ENCODE measurements at regions of chr10 and their contacts with region 1.

Region 1: GRCh38 chr10:21336476-21337170 is 188.9 kb downstream of the SKIDA1 start:
- DNase-seq: peak; percentile 81 to 85
- H3K4me3 ChIP-seq: peak overlapping the region; percentile 8; the same call in 1 of the 2 replicates
- H3K27ac ChIP-seq: peak overlapping the region; percentile 92
- H3K4me1 ChIP-seq: peaks cover 54% of the 10 kb centered on the region
- H3K27me3 ChIP-seq: no peaks in the 10 kb centered on the region
- CTCF ChIP-seq: no peak

Region 2: DNA sequence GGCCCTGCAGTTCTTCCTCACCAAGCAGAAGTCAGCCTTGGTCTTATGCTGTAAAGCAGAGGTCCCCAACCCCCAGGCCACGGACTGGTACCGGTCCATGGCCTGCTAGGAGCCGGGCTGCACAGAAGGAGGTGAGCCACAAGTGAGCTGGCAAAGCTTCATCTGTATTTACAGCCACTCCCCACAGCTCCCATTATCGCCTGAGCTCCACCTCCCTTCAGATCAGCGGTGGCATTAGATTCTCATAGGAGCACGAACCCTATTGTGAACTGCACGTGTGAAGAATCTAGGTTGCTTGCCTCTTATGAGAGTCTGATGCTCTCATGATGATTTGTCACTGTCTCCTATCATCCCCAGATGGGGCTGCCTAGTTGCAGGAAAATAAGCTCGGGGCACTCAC is 352.0 kb before region 1 on chr10:
- CTCF ChIA-PET with region 1: no interaction called
- POLR2A ChIA-PET with region 1: no interaction called
- intact Hi-C with region 1: no loop called
- DNase-seq: no peak
- H3K4me3 ChIP-seq: no peak overlapping the region
- H3K27ac ChIP-seq: no peak overlapping the region
- H3K4me1 ChIP-seq: no peaks in the 10 kb centered on the region
- H3K27me3 ChIP-seq: no peaks in the 10 kb centered on the region
- CTCF ChIP-seq: no peak

Region 3: GRCh38 chr10:21083871-21084295 is 252.7 kb before region 1 on chr10:
- CTCF ChIA-PET with region 1: no interaction called
- POLR2A ChIA-PET with region 1: no interaction called
- intact Hi-C with region 1: loop called (anchors 2 kb)
- DNase-seq: peak; percentile 75 to 97
- H3K4me3 ChIP-seq: no peak overlapping the region
- H3K27ac ChIP-seq: peak overlapping the region; percentile 80
- H3K4me1 ChIP-seq: peaks cover 21% of the 10 kb centered on the region
- H3K27me3 ChIP-seq: no peaks in the 10 kb centered on the region
- CTCF ChIP-seq: no peak

Region 4: DNA sequence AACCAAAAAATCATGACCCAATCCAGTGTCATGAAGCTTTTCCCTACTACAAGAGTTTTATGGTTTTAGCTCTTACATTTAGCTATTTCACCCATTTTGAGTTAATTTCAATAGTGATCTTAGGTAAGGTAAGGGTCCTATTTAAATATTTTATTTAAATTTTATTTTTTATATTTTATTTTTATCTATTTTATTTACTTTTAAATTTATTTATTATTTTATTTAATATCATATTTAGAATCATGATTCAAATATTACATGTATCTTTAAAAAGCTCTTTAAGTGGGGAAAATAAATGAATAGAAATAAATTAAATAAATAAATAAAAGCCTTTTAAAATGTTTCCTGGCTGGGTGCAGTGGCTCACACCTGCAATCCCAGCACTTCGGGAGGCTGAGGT is 87.2 kb before region 1 on chr10:
- CTCF ChIA-PET with region 1: no interaction called
- POLR2A ChIA-PET with region 1: no interaction called
- intact Hi-C with region 1: no loop called
- DNase-seq: no peak
- H3K4me3 ChIP-seq: no peak overlapping the region
- H3K27ac ChIP-seq: no peak overlapping the region
- H3K4me1 ChIP-seq: no peaks in the 10 kb centered on the region
- H3K27me3 ChIP-seq: no peaks in the 10 kb centered on the region
- CTCF ChIP-seq: no peak

Region 5: DNA sequence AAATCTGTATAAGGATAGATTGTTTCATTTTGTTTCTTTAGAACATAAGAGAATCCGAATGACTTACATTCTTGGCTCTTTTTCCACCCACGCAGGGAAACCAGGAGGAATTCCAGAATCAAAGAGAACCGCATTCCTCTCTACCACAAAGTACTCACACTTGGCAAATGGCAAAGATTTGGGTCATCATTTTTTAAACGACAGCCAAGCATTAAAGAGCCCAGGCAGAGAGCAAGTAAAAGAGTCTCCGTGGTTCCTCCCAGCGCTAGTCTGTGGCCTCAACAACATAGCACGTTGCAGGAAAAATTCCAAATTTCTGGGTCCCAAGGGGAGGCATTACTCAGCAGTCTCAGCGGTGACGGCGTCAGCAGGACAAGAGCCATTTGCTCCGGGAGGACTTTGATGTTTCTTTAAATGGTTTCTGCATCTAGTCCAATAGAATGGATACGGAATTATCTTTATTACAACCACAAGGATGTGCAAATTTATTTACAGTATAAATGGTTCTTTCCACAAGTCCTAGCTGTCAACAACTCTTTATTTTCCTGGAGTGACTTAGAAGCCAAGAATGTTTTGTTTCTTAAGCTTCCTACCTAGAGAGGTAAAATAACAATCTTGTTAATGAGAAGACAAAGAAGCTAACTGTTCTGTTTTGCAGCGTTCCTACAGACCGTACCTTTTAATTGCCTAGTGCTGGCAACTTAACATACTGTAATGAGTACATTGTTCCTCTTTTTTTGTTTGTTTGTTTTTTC is 43.7 kb before region 1 on chr10:
- CTCF ChIA-PET with region 1: interaction called, 3 read pairs
- POLR2A ChIA-PET with region 1: interaction called, 4 read pairs
- intact Hi-C with region 1: loop called (anchors 1 kb)
- DNase-seq: peak; percentile 77 to 87
- H3K4me3 ChIP-seq: peak overlapping the region; percentile 51; the same call in 1 of the 2 replicates
- H3K27ac ChIP-seq: peak overlapping the region; percentile 85
- H3K4me1 ChIP-seq: peaks cover 32% of the 10 kb centered on the region
- H3K27me3 ChIP-seq: no peaks in the 10 kb centered on the region
- CTCF ChIP-seq: no peak

Region 6: DNA sequence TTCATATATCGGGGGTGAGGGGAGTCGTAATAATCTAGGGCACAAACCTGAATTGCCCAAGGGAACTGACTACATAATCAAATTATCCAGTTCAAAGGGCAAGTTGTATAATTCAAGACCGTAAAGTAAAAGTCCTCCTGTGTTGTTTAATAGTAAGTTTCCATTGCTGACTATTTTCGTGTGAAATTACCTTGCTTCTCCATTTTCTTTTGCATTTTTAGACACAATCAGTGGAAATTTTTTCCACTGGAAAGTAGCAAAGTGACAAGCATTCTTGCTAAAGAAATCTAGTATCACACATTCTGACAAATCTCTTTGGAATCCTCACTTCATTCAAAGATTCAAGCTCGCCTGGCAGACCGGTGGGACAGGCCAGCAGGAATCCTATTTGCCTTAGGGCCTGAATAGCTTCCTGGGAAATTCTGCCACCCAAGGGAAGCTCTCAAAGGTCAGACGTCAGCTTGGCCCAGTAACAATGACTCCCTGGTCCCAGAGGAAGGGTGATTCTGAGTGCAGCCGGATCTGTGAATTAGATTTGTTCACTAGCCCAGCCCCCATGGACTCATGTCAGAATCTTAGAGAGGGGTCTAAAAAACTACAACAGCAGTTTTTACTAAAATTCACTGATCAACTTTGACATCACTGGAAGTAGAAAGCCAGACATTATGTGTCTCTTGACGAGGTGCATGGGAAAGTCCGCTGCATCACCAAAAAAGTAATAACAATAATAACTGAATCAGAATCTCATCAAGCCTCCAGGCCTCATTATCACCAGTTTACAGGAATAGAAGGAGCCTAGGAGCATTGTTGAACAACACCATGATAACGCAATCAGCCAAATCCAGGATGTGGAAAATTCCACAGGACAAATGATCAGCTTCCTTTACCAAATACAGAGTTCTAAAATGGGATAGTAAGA is 27.8 kb after region 1 on chr10:
- CTCF ChIA-PET with region 1: interaction called, 5 read pairs
- POLR2A ChIA-PET with region 1: interaction called, 5 read pairs
- intact Hi-C with region 1: loop called (anchors 1 kb)
- DNase-seq: peak; percentile 88 to 97
- H3K4me3 ChIP-seq: peak overlapping the region; percentile 48; the same call in 1 of the 2 replicates
- H3K27ac ChIP-seq: peak overlapping the region; percentile 100
- H3K4me1 ChIP-seq: peaks cover 75% of the 10 kb centered on the region
- H3K27me3 ChIP-seq: no peaks in the 10 kb centered on the region
- CTCF ChIP-seq: no peak

Region 7: GRCh38 chr10:21495752-21496342 is 159.2 kb after region 1 on chr10:
- CTCF ChIA-PET with region 1: interaction called, 3 read pairs
- POLR2A ChIA-PET with region 1: no interaction called
- intact Hi-C with region 1: loop called (anchors 1 kb)
- DNase-seq: peak; percentile 56 to 94
- H3K4me3 ChIP-seq: peak overlapping the region; percentile 81
- H3K27ac ChIP-seq: peak overlapping the region; percentile 48
- H3K4me1 ChIP-seq: peaks cover 6% of the 10 kb centered on the region
- H3K27me3 ChIP-seq: no peaks in the 10 kb centered on the region
- CTCF ChIP-seq: peak; percentile 78

Region 8: GRCh38 chr10:21533467-21534279 is 197.1 kb after region 1 on chr10 and contains the start of gene MLLT10:
- CTCF ChIA-PET with region 1: no interaction called
- POLR2A ChIA-PET with region 1: interaction called, 6 read pairs
- intact Hi-C with region 1: loop called (anchors 2 kb)
- DNase-seq: peak; percentile 67 to 95
- H3K4me3 ChIP-seq: peak within 1 kb of the TSS; percentile 71
- H3K27ac ChIP-seq: peak within 1 kb of the TSS; percentile 72
- H3K4me1 ChIP-seq: peaks cover 16% of the 10 kb centered on the region
- H3K27me3 ChIP-seq: no peaks in the 10 kb centered on the region
- CTCF ChIP-seq: no peak
- total RNA-seq, gene MLLT10: 39.6 and 48.4 TPM in 2 replicates

Region 9: GRCh38 chr10:21556527-21556926 is 219.9 kb after region 1 on chr10:
- CTCF ChIA-PET with region 1: no interaction called
- POLR2A ChIA-PET with region 1: no interaction called
- intact Hi-C with region 1: no loop called
- DNase-seq: no peak
- H3K4me3 ChIP-seq: no peak overlapping the region
- H3K27ac ChIP-seq: no peak overlapping the region
- H3K4me1 ChIP-seq: peaks cover 7% of the 10 kb centered on the region
- H3K27me3 ChIP-seq: no peaks in the 10 kb centered on the region
- CTCF ChIP-seq: no peak

Measured in PC-9 (cell line).